PC-3 (cell line): ENCODE measurements at regions of chr11 and their contacts with region 1.

Region 1: GRCh38 chr11:7246179-7246578 is 5.5 kb upstream of the SYT9 start:
- DNase-seq: peak; percentile 87
- ATAC-seq: peak; percentile 91
- H3K4me3 ChIP-seq: peak overlapping the region; percentile 52
- H3K27ac ChIP-seq: peak overlapping the region; percentile 96
- H3K4me1 ChIP-seq: peaks cover 37% of the 10 kb centered on the region
- H3K27me3 ChIP-seq: no peaks in the 10 kb centered on the region
- CTCF ChIP-seq: no peak

Region 2: GRCh38 chr11:7160814-7161489 is 85.2 kb before region 1 on chr11:
- CTCF ChIA-PET with region 1: no interaction called
- POLR2A ChIA-PET with region 1: no interaction called
- intact Hi-C with region 1: loop called (anchors 1 kb)
- DNase-seq: no peak
- ATAC-seq: peak; percentile 92
- H3K4me3 ChIP-seq: no peak overlapping the region
- H3K27ac ChIP-seq: no peak overlapping the region
- H3K4me1 ChIP-seq: no peaks in the 10 kb centered on the region
- H3K27me3 ChIP-seq: no peaks in the 10 kb centered on the region
- CTCF ChIP-seq: no peak

Region 3: GRCh38 chr11:7278314-7278917 is 32.2 kb after region 1 on chr11:
- CTCF ChIA-PET with region 1: no interaction called
- POLR2A ChIA-PET with region 1: no interaction called
- intact Hi-C with region 1: loop called (anchors 5 kb)
- DNase-seq: peak; percentile 69
- ATAC-seq: peak; percentile 68
- H3K4me3 ChIP-seq: no peak overlapping the region
- H3K27ac ChIP-seq: no peak overlapping the region
- H3K4me1 ChIP-seq: peaks cover 21% of the 10 kb centered on the region
- H3K27me3 ChIP-seq: no peaks in the 10 kb centered on the region
- CTCF ChIP-seq: peak; percentile 84

Region 4: DNA sequence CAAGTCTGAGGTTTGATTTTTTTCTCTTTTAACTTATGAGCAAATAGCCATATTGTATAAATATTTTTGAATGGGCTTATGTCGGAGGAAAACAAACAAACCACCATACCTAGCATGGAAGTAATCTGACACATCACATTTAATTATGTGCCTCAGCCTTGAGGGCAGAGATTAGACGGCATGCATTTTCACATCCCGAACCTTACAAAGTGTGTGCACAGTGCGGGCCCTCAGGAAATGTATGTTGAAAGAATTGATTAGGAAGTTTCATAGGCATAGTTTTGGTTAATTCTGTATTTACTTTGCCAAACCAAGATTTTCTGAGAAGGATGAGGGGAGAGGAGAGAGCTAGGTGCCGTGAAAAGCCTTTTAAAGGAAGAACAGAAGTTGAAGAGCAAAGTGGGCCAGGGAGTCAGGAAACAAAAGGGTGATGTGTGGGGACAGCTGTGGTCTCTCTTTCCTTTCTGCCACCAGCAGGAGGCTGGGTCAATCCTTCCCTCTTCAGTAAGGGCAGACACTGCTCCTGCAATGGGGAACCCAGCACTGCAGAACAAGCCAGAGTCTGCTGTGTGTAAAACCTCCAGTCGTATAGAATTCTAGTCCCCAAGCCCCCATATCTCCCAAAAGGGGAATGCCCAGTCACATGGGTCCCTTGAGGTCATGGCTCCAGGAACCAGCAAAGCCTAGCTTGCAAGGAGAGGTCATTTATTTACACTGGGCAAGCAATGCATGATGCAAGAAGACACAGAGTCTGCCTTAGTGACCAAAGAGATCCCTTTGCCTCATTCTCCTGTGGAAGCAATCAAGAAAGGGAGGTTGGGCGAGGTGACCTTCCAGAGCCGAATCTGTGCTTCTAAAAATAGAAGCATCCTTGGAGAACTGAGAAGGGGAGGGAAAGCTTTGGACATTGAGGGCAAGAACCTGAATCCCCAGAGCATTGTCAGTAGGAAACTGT is 168.1 kb after region 1 on chr11:
- CTCF ChIA-PET with region 1: no interaction called
- POLR2A ChIA-PET with region 1: no interaction called
- intact Hi-C with region 1: loop called (anchors 1 kb)
- DNase-seq: peak; percentile 83
- ATAC-seq: peak; percentile 87
- H3K4me3 ChIP-seq: peak overlapping the region; percentile 33; the same call in 1 of the 2 replicates
- H3K27ac ChIP-seq: peak overlapping the region; percentile 57
- H3K4me1 ChIP-seq: peaks cover 45% of the 10 kb centered on the region
- H3K27me3 ChIP-seq: no peaks in the 10 kb centered on the region
- CTCF ChIP-seq: no peak

Region 5: DNA sequence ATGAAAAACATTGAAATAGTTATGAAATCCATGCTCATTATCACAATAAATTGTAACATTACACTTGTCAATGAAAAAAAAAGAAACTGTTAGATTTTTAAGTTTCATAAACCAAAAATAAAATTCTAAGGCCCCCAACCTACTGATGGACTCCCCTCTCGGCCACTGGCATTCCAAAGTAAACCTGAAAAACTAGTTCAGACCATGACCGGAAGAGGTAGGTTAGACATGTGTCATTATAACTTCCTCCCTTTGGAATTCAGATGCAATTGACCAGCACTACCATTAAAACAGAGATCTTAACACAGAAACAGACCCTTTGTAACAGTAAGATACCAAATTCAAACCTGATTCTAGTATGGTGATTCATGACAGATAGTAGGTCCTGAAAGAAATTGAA is 671.9 kb after region 1 on chr11:
- CTCF ChIA-PET with region 1: no interaction called
- POLR2A ChIA-PET with region 1: no interaction called
- intact Hi-C with region 1: no loop called
- DNase-seq: peak; percentile 54
- ATAC-seq: no peak
- H3K4me3 ChIP-seq: no peak overlapping the region
- H3K27ac ChIP-seq: no peak overlapping the region
- H3K4me1 ChIP-seq: peaks cover 7% of the 10 kb centered on the region
- H3K27me3 ChIP-seq: no peaks in the 10 kb centered on the region
- CTCF ChIP-seq: no peak